Dendritic cell treated with granulocyte-macrophage colony-stimulating factor and Interleukin-4, amounts not matched to agents 40 ng/mL and 50 ng/mL, for 4 days (primary cell): ENCODE measurements at regions of chr4 and their contacts with region 1.

Region 1: DNA sequence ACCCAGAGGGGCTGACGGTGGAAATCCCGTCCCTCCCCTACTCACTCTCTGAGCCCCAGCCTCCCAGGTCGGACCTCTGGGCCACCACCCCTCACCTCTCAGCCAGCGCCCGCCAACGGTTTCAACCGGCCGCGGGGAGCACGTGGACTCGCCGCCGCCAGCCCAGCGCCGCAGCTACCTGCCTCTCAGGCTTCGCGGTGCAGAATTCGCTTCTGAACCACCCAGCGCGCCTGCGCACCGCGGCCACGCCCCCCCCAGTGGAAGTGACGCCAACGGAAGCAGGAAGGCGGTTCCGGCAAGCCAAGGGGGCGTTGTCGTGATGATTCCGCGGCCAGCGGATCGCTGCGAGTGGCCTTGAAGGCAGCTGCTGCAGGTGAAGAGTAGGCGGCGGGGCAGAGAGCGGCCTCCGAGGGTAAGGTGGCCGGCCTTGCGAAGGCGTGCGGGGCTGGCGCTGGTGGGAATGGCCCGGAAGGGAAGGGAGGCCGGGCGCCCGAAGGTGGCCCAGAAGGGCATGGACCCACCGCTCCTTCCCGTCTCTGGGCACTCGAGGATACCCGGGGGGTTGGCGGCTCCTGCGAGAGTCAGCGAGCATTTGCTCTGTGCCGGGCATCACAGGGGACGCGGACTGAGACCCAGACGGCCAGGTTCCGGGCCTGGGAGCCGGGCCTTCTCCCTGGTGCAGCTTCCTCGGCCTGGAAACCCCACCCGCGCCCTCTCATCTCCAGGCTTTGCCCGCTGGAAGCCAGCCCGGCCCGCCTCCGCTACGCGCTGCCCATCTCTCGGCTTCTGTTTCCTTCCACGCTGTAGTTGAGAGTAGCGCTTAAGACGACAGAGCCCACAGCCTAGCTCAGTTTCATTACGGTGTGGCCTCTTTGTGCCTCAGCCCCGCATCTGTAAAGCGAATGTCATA is at the starts of genes LYAR and ZBTB49:
- H3K4me3 Mint-ChIP-seq: peak within 1 kb of the TSS; percentile 94
- H3K27ac Mint-ChIP-seq: peak within 1 kb of the TSS; percentile 87
- H3K4me1 Mint-ChIP-seq: peaks cover 47% of the 10 kb centered on the region
- H3K27me3 Mint-ChIP-seq: no peaks in the 10 kb centered on the region

Region 2: DNA sequence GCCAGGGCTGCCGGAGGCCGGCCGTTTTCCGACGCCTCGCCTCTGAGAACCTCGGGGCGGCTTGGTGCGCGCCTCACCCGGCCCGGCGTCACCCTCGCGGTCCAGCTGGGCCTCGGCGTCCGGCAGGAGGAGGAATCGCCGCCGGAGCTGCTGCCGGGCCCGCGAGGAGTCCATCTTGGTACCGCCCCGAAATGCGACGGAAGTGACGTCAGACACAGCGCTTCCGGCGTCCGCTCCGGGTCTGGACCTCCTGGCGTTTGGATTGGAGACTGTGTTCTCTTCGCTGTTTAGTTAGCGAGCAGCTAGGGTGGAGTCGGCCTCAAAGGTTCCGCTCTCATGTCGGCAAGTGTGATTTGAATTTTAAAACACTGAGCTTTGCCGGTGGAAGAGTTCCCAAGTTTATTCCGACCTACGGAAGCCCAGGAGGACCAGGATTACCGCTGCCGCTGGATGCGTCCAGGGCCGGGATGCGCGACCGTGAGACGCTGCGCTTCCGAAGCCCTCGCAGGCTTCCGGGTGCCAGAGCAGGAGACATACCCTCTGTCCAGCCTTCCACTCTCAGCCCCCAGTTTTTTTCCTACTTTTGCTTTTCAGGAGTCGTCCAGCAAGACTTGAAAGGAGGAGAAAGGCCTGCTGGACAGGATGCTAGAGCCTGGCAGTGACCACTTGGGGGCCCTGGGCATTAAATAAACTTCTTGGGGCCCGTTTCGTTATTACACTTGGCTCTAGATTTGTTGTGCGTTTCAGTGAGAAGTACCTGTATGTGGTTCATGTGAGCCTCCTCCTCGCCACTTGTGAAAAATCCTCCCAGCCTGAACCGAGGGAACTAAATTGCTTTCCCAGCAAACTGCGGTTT is 41.9 kb before region 1 on chr4 and contains the start of gene TMEM128:
- intact Hi-C with region 1: loop called (anchors 1 kb)
- H3K4me3 Mint-ChIP-seq: peak within 1 kb of the TSS; percentile 95
- H3K27ac Mint-ChIP-seq: peak within 1 kb of the TSS; percentile 97
- H3K4me1 Mint-ChIP-seq: peaks cover 30% of the 10 kb centered on the region
- H3K27me3 Mint-ChIP-seq: peaks cover 11% of the 10 kb centered on the region

Region 3: GRCh38 chr4:4334798-4335520 is 44.8 kb after region 1 on chr4:
- intact Hi-C with region 1: loop called (anchors 1 kb)
- H3K4me3 Mint-ChIP-seq: no peak overlapping the region
- H3K27ac Mint-ChIP-seq: no peak overlapping the region
- H3K4me1 Mint-ChIP-seq: no peaks in the 10 kb centered on the region
- H3K27me3 Mint-ChIP-seq: peaks cover 8% of the 10 kb centered on the region

Region 4: GRCh38 chr4:4541661-4542570 is 251.7 kb after region 1 on chr4 and contains the start of gene STX18:
- intact Hi-C with region 1: loop called (anchors 5 kb)
- H3K4me3 Mint-ChIP-seq: peak within 1 kb of the TSS; percentile 80
- H3K27ac Mint-ChIP-seq: peak within 1 kb of the TSS; percentile 89
- H3K4me1 Mint-ChIP-seq: peaks cover 38% of the 10 kb centered on the region
- H3K27me3 Mint-ChIP-seq: peaks cover 2% of the 10 kb centered on the region